A549 (cell line): ENCODE measurements at regions of chr12 and their contacts with region 1.

Region 1: GRCh38 chr12:121888478-121889266 is at the start of gene PSMD9:
- DNase-seq: peak; percentile 97 to 99
- ATAC-seq: peak; percentile 96 to 97
- H3K4me3 ChIP-seq: peak within 1 kb of the TSS; percentile 69
- H3K27ac ChIP-seq: peak within 1 kb of the TSS; percentile 86 to 92
- H3K4me1 ChIP-seq: peaks cover 22% of the 10 kb centered on the region
- CTCF ChIP-seq: peak; percentile 65
- EP300 ChIP-seq: peak in 1 of 2 experiments; percentile 29; a peak in 1 of 5 replicates
- POLR2A ChIP-seq: peak; percentile 72
- RAD21 ChIP-seq: peak; percentile 68 to 76; a peak in 4 of 5 replicates
- polyA plus RNA-seq, gene PSMD9: 81.4 and 89.3 TPM in 2 replicates

Region 2: DNA sequence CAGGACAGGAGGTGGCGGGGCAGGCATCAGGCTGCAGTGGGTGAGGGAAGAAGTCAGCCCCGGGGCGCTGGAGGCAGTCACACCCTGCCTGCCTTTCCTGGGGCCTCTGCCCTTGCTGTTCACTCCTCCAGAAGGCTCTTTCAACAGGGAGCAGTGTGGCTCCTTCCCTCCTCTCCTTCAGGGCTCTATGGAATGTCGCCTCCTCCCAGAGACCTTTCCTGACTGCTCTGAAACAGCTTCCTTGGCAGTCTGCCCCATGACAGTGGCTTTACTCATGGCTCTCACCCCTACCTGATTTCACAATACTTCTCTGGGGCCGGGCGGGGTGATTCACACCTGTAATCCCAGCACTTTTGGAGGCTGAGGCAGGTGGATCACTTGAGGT is 102.2 kb before region 1 on chr12:
- CTCF ChIA-PET with region 1: interaction called, 195 read pairs
- POLR2A ChIA-PET with region 1: interaction called, 4 read pairs
- DNase-seq: peak; percentile 76 to 97
- ATAC-seq: peak; percentile 78 to 80
- H3K4me3 ChIP-seq: no peak overlapping the region
- H3K27ac ChIP-seq: peak overlapping the region; percentile 72 to 100
- H3K4me1 ChIP-seq: peaks cover 97% of the 10 kb centered on the region
- CTCF ChIP-seq: 0 out of 3 replicates have a peak, but pooled peaks have one; percentile 5
- EP300 ChIP-seq: peak in 1 of 2 experiments; percentile 49; a peak in 2 of 5 replicates
- POLR2A ChIP-seq: no peak
- RAD21 ChIP-seq: peak; percentile 21 to 22; a peak in 1 of 5 replicates

Region 3: GRCh38 chr12:121802846-121803630 is 85.6 kb before region 1 on chr12:
- CTCF ChIA-PET with region 1: interaction called, 195 read pairs
- POLR2A ChIA-PET with region 1: interaction called, 10 read pairs
- DNase-seq: peak; percentile 87 to 96
- ATAC-seq: peak; percentile 37 to 65
- H3K4me3 ChIP-seq: peak overlapping the region; percentile 60
- H3K27ac ChIP-seq: peak overlapping the region; percentile 100
- H3K4me1 ChIP-seq: peaks cover 52% of the 10 kb centered on the region
- CTCF ChIP-seq: no peak
- EP300 ChIP-seq: no peak
- POLR2A ChIP-seq: peak; percentile 53
- RAD21 ChIP-seq: no peak

Region 4: GRCh38 chr12:121811434-121812319 is 77.0 kb before region 1 on chr12:
- CTCF ChIA-PET with region 1: interaction called, 39 read pairs
- POLR2A ChIA-PET with region 1: interaction called, 7 read pairs
- DNase-seq: peak; percentile 70 to 72
- ATAC-seq: peak; percentile 81 to 89
- H3K4me3 ChIP-seq: peak overlapping the region; percentile 53
- H3K27ac ChIP-seq: peak overlapping the region; percentile 74 to 85
- H3K4me1 ChIP-seq: peaks cover 39% of the 10 kb centered on the region
- CTCF ChIP-seq: peak; percentile 97
- EP300 ChIP-seq: no peak
- POLR2A ChIP-seq: no peak
- RAD21 ChIP-seq: peak; percentile 54 to 92; a peak in 4 of 5 replicates

Region 5: DNA sequence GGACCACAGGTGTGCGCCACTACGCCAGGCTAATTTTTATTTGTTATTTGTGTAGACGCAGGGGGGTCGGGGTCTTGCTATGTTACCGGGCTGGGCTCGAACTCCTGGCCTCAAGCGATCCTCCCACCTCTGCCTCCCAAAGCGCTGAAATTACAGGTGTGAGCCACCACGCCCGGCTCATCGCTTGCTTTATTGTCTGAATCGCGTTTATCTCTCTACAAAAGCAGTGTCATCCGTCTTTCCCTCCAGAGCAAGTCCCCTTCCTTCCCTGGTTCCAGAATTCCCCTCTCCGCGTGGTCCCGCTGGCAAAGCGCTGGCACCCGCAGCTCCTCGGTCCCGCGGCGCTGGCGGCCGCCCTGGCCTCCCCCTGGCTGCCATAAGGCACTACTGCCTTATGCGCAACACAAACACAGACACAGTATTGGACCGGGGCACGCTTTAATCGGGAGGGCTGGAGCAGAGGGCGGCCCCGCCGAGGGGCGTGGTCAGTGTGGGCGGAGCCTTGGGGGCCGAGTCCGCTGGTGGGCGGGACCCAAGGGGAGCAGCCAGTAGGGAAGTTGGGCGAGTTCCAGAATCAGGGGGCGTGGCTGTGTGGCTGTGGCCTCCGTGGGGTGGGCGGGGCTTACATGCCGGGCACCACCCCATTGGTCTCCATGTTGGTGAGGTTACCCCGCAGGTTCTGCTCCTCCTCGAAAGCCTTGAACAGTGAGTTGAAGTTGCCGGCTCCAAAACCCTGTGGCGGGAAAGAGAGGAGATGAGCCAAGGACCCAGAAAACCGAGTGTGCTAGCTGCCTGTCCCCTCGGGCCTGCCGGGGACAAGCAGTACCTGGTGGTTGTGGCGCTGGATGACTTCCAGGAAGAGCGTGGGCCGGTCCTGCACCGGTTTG is 49.3 kb before region 1 on chr12:
- CTCF ChIA-PET with region 1: interaction called, 28 read pairs
- POLR2A ChIA-PET with region 1: no interaction called
- DNase-seq: peak; percentile 96 to 98
- ATAC-seq: peak; percentile 93 to 94
- H3K4me3 ChIP-seq: peak overlapping the region; percentile 54
- H3K27ac ChIP-seq: peak overlapping the region; percentile 76 to 88
- H3K4me1 ChIP-seq: no peaks in the 10 kb centered on the region
- CTCF ChIP-seq: no peak
- EP300 ChIP-seq: no peak
- POLR2A ChIP-seq: peak; percentile 55
- RAD21 ChIP-seq: no peak

Region 6: GRCh38 chr12:121949648-121950397 is 61.2 kb after region 1 on chr12:
- CTCF ChIA-PET with region 1: no interaction called
- POLR2A ChIA-PET with region 1: no interaction called
- DNase-seq: peak in 1 of 2 experiments; percentile 79
- ATAC-seq: peak; percentile 93 to 96
- H3K4me3 ChIP-seq: no peak overlapping the region
- H3K27ac ChIP-seq: peak overlapping the region; percentile 46 to 51
- H3K4me1 ChIP-seq: peaks cover 11% of the 10 kb centered on the region
- CTCF ChIP-seq: no peak
- EP300 ChIP-seq: no peak
- POLR2A ChIP-seq: no peak
- RAD21 ChIP-seq: no peak